Activated CD8-positive, alpha-beta T cell treated with anti-CD3 and anti-CD28 coated beads for 36 hours (primary cell): ENCODE measurements at regions of chr14 and their contacts with region 1.

Region 1: GRCh38 chr14:64891839-64892375 is 12.2 kb upstream of the SPTB start:
- DNase-seq: peak; percentile 39
- ATAC-seq: peak; percentile 89
- H3K4me3 Mint-ChIP-seq: no peak overlapping the region
- H3K27ac Mint-ChIP-seq: no peak overlapping the region
- H3K4me1 Mint-ChIP-seq: peaks cover 2% of the 10 kb centered on the region
- H3K27me3 Mint-ChIP-seq: peaks cover 3% of the 10 kb centered on the region
- CTCF ChIP-seq: peak; percentile 69

Region 2: DNA sequence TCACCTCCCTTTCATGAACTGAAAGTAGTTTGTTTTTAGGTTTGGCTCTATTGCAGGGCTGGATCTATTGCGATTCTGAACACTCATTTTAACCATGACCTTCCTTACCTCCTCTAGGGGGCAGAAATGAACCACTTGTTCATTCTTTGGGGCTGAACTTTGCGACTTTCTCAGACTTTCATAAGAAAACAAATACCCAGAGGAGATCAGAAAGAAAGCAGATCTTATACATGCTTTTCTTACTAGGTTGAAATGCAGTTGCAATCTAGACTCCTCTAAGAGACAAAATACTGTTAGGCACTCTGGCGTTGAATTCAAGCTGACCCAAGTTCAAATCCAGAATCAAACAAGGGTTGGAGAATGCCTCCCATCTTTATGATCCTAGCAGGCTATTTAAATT is 220.3 kb before region 1 on chr14:
- CTCF ChIA-PET with region 1: interaction called, 16 read pairs
- POLR2A ChIA-PET with region 1: interaction called, 3 read pairs
- intact Hi-C with region 1: no loop called
- DNase-seq: no peak
- ATAC-seq: peak; percentile 77
- H3K4me3 Mint-ChIP-seq: no peak overlapping the region
- H3K27ac Mint-ChIP-seq: no peak overlapping the region
- H3K4me1 Mint-ChIP-seq: peaks cover 7% of the 10 kb centered on the region
- H3K27me3 Mint-ChIP-seq: no peaks in the 10 kb centered on the region
- CTCF ChIP-seq: peak; percentile 56

Region 3: GRCh38 chr14:64792921-64793565 is 98.9 kb before region 1 on chr14:
- CTCF ChIA-PET with region 1: interaction called, 11 read pairs
- POLR2A ChIA-PET with region 1: no interaction called
- intact Hi-C with region 1: no loop called
- DNase-seq: no peak
- ATAC-seq: no peak
- H3K4me3 Mint-ChIP-seq: no peak overlapping the region
- H3K27ac Mint-ChIP-seq: no peak overlapping the region
- H3K4me1 Mint-ChIP-seq: no peaks in the 10 kb centered on the region
- H3K27me3 Mint-ChIP-seq: no peaks in the 10 kb centered on the region
- CTCF ChIP-seq: no peak

Region 4: DNA sequence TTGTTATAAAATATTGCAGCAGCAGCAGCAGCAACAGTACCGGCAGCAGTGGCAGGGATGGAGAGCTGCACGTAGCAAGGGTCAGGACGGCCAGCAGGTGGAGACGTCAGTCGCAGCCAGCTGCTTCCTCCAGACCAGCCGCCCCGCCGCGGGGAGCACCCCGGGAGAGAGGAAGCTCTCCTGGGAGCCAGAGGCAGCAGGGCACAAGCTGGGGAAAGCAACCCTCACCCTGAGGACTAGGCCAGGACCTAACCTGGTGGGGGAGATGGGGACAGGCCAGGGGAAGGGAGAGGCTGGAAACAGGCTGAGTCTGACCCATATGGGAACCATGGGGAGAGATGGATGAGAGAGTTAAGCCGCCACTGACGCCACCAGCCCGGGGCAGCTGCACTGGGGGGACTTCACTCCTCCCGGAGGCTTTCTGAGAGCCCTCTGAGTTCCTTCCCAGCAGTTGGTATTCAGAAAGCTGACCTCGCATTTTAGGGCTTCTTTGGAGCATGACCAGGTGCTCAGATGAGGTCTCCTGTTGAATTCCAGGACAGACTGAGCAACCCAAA is 68.5 kb before region 1 on chr14:
- CTCF ChIA-PET with region 1: interaction called, 209 read pairs
- POLR2A ChIA-PET with region 1: interaction called, 3 read pairs
- intact Hi-C with region 1: loop called (anchors 5 kb)
- DNase-seq: peak; percentile 79
- ATAC-seq: peak; percentile 96
- H3K4me3 Mint-ChIP-seq: no peak overlapping the region
- H3K27ac Mint-ChIP-seq: no peak overlapping the region
- H3K4me1 Mint-ChIP-seq: peaks cover 5% of the 10 kb centered on the region
- H3K27me3 Mint-ChIP-seq: peaks cover 12% of the 10 kb centered on the region
- CTCF ChIP-seq: peak; percentile 71

Region 5: GRCh38 chr14:64870160-64870559 is 21.7 kb before region 1 on chr14:
- CTCF ChIA-PET with region 1: interaction called, 92 read pairs
- POLR2A ChIA-PET with region 1: no interaction called
- intact Hi-C with region 1: no loop called
- DNase-seq: no peak
- ATAC-seq: no peak
- H3K4me3 Mint-ChIP-seq: no peak overlapping the region
- H3K27ac Mint-ChIP-seq: no peak overlapping the region
- H3K4me1 Mint-ChIP-seq: no peaks in the 10 kb centered on the region
- H3K27me3 Mint-ChIP-seq: peaks cover 21% of the 10 kb centered on the region
- CTCF ChIP-seq: no peak

Region 6: DNA sequence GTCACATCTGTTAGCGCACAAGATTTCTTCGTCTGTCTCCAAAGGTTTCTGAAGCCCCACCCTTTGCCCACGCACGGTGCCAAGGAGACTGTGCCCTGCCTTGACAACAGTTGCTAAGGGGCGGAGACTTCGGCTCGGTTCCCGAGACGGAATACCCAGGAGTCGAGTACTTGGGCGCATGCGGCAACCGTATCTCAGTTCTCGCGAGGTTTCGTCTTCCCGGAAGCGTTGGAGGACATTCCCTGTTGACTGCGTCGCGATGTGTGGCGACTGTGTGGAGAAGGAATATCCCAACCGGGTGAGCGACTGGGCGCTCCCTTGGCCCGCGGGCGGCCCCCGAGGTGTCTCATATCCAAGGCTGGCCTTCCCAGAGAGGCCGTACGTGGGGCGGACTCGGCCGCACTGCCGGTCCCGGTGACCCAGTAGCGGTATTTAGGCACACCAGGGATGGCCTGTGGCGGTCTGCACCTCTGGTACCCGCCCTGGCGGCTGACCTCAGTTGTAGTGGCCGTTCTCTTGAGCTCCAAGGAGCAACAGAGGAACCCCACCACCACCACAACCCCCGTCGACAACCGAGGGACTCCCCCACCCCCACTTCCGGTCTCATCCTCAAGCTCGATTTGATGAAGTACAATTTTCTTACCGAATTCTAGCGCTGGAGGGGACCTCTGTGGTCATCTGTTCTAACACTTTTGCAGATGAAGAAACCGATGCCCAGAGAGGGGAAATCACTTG is 22.5 kb after region 1 on chr14 and contains the start of gene CHURC1:
- CTCF ChIA-PET with region 1: interaction called, 33 read pairs
- POLR2A ChIA-PET with region 1: no interaction called
- intact Hi-C with region 1: no loop called
- DNase-seq: peak; percentile 98
- ATAC-seq: peak; percentile 95
- H3K4me3 Mint-ChIP-seq: peak within 1 kb of the TSS; percentile 79
- H3K27ac Mint-ChIP-seq: peak within 1 kb of the TSS; percentile 95
- H3K4me1 Mint-ChIP-seq: peaks cover 55% of the 10 kb centered on the region
- H3K27me3 Mint-ChIP-seq: no peaks in the 10 kb centered on the region
- CTCF ChIP-seq: no peak
- total RNA-seq, gene CHURC1: 47.0 to 57.4 TPM

Region 7: DNA sequence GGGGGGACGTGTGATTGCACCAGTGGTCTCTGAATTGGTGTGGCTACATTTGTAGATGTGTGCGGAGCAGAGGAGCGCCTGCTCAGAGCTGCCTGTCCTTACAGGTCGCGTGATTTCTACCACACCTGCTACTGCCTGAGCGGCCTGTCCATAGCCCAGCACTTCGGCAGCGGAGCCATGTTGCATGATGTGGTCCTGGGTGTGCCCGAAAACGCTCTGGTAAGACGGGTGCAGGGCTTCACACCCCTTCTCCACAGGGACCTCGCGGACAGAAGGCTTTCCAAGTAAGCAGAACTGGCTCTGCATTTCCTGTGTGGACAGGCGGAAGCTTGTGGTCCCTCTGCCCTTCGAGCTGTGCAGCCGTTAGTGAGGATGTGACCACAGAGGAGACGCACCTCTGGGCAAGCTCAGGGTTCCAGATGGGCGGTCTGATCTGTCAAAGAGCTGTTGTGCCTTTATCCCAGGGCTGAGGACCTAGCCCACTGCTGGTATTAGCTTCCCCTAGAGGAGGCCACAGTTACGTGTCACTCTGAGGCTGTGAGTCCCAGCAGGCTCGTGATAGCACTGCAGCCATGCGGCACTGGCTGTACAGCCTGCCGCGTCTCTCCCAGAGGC is 162.7 kb after region 1 on chr14:
- CTCF ChIA-PET with region 1: no interaction called
- POLR2A ChIA-PET with region 1: no interaction called
- intact Hi-C with region 1: no loop called
- DNase-seq: no peak
- ATAC-seq: no peak
- H3K4me3 Mint-ChIP-seq: no peak overlapping the region
- H3K27ac Mint-ChIP-seq: no peak overlapping the region
- H3K4me1 Mint-ChIP-seq: no peaks in the 10 kb centered on the region
- H3K27me3 Mint-ChIP-seq: no peaks in the 10 kb centered on the region
- CTCF ChIP-seq: no peak